Dorsolateral prefrontal cortex (tissue), 120 donors: ENCODE measurements at regions of chr16 and their contacts with region 1.

Region 1: DNA sequence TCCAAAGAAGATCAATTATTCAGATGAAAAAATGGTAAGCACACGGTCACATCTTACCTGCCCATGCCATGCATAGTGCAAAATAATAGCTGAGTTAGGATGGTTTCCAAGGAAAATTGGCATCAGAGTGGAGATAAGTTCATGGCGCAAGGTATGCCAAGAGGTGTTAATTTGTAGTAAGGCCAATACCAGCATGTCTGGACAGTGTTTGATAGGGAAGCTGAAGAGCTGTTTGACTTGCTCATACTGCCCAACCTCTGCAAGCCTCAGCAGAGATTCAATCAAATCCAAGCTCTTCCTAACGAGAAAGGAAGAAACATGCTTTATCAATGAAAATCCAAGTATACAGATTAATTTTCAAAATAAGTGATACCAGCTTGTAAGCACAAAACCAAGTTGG is 51.0 kb downstream of the CNOT1 start:
- DNase-seq: no peak
- H3K4me3 ChIP-seq: no peak overlapping the region
- H3K27ac ChIP-seq: no peak overlapping the region
- H3K27me3 ChIP-seq: no peaks in the 10 kb centered on the region
- CTCF ChIP-seq: no peak

Region 2: GRCh38 chr16:58533751-58534470 is 44.7 kb before region 1 on chr16:
- intact Hi-C with region 1: loop called in 1 of 2 experiments (anchors 5 kb)
- DNase-seq: no peak
- H3K4me3 ChIP-seq: no peak overlapping the region
- H3K27ac ChIP-seq: no peak overlapping the region
- H3K27me3 ChIP-seq: no peaks in the 10 kb centered on the region
- CTCF ChIP-seq: no peak

Region 3: GRCh38 chr16:58614212-58614611 is 35.6 kb after region 1 on chr16:
- intact Hi-C with region 1: no loop called
- DNase-seq: no peak
- H3K4me3 ChIP-seq: no peak overlapping the region
- H3K27ac ChIP-seq: no peak overlapping the region
- H3K27me3 ChIP-seq: no peaks in the 10 kb centered on the region
- CTCF ChIP-seq: no peak